ENCODE measurements at regions of chr1 and their contacts with region 1.

Region 1: DNA sequence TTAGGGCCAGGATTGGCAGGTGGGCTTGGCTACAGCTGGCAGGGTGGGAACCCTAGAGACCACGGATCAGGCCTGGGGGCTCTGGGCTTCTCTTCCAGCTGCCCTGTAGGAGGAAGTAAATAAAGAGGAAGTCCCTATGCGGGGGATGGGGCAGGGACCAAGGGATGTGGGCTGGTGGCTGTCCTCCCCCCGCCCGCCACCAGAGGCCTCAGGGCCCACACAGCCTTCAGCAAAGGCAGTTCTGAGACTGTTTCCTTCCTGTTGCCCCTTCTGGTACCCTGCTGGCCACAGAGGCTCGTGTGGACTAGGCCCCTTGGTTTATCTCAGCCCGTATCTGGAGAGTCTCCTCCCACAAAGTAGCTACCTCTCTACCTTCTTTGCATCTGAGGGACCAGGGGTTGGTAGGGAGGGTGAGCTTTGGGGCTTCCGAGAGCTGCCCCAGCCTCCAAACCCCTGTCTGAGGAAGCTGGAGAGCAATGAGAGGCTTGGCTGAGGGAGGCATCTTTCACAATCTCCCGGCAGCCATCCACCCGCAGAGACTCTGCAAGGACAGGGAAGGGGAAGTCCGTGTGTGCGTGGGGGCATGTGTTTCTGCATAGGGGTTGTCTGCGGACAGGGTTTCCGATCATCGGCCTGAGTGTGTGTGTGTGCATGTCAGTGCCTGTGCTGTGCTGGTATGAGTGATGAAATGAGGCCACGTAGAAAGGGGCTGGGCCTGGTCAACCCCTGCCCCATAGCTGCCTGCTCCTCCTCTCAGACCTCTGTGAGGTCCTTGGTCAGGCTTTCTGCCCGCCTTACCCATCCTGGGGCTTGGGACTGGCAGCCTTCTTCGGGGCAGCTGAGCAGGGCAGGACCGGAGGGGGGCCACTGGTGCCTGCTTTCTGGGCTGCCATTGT is 12.5 kb downstream of the RPS6KA1 start:
- DNase-seq: peak; percentile 73
- H3K4me3 Mint-ChIP-seq: peak overlapping the region; percentile 76
- H3K27ac Mint-ChIP-seq: peak overlapping the region; percentile 95
- H3K4me1 Mint-ChIP-seq: peaks cover 85% of the 10 kb centered on the region
- H3K27me3 Mint-ChIP-seq: no peaks in the 10 kb centered on the region

Region 2: DNA sequence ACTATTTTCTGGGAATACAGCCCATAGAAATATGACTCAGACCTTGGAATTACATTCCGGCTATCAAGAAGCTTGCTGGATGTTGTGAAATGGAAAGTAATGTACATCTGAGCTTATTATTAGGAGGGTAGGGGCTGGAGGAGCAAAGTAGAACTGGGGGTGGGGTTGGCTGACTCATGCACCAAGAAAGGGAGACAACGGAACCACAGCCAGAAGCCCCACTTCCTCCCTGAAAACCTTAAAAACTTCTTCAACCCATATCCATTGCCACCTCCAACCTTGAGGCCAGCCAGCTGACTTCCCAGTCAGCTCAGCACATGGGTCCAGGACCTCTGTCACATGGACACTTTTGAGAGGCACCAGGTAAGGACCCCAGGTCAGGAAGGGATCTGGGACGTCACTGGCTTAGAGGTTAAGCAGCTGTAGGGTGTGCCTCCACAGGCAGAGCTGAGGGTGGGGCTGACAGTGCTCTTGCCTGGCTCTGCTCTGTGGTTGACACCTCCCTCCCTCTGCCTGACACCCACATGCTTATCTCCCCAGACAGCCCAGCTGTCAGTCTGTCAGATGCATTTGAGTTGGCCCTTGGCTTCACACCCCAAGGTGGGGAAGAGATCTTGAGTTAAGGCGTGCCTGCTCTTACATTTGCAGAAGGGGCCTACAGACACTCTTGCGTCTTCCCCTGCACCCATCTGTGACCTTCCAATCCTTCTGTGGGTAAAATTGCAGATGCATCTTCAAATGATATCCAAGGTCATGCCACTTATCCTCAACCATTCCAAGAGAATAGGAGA is 163.8 kb before region 1 on chr1:
- intact Hi-C with region 1: loop called (anchors 5 kb)
- DNase-seq: peak; percentile 82
- H3K4me3 Mint-ChIP-seq: peak overlapping the region; percentile 69
- H3K27ac Mint-ChIP-seq: peak overlapping the region; percentile 76
- H3K4me1 Mint-ChIP-seq: peaks cover 66% of the 10 kb centered on the region
- H3K27me3 Mint-ChIP-seq: peaks cover 3% of the 10 kb centered on the region

Region 3: GRCh38 chr1:26500488-26501175 is 41.4 kb before region 1 on chr1:
- intact Hi-C with region 1: loop called (anchors 1 kb)
- DNase-seq: peak; percentile 84
- H3K4me3 Mint-ChIP-seq: peak overlapping the region; percentile 90
- H3K27ac Mint-ChIP-seq: peak overlapping the region; percentile 91
- H3K4me1 Mint-ChIP-seq: peaks cover 18% of the 10 kb centered on the region
- H3K27me3 Mint-ChIP-seq: no peaks in the 10 kb centered on the region

Region 4: DNA sequence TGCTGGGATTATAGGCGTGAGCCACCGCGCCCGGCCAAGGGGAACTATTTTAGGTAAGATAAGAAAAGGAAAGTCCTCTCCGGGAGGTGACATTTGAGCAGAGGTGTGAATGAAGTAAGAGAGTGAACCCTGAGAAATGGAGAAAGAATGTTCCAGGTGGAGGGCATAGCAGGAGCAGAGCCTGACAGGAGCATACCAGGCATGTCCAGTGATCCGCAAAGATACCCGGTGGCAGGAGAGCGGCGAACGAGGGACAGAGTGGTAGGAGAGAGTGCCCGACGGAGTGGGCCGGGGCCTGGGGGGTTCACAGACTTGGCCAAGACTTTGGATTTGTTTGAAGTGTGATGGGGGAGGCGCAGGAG is 20.4 kb before region 1 on chr1:
- intact Hi-C with region 1: no loop called
- DNase-seq: no peak
- H3K4me3 Mint-ChIP-seq: no peak overlapping the region
- H3K27ac Mint-ChIP-seq: no peak overlapping the region
- H3K4me1 Mint-ChIP-seq: peaks cover 6% of the 10 kb centered on the region
- H3K27me3 Mint-ChIP-seq: peaks cover 22% of the 10 kb centered on the region

Region 5: DNA sequence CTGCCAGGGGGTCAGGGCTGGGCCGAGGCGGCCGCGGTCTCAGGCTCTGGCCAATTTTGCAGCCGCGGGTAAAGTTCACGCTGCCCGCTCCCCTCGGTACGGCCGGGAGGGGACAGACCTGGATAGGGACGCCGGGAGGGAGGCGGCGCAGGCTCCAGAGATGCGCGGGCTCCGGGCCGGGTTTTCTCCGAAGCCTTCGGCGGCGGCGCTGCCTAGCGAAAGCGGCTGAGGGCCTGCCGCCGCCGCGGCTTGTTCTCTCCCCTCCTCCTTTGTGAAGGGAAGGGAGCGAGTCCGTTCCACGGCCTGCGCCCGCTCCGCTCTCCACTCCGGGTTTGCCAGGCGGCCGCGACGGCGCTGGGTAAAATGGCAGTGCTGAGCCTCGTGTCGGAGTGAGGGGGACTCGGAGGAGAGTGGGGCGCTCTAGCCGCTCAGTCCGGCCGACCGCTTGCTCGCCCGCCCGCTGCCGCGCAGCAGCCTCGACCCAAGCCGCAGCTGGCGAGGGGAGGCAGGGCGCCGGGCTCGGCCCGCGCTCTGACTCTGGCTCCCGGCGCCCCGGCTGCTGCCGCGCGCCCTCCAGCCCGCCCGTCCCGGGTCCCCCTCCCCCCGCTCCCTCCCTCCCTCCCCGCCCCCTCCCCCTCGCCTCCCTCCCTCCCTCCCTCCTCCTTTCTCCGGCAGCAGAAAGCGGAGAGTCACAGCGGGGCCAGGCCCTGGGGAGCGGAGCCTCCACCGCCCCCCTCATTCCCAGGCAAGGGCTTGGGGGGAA is 153.5 kb after region 1 on chr1 and contains the start of gene ARID1A:
- intact Hi-C with region 1: loop called (anchors 2 kb)
- DNase-seq: peak; percentile 96
- H3K4me3 Mint-ChIP-seq: peak within 1 kb of the TSS; percentile 90
- H3K27ac Mint-ChIP-seq: peak within 1 kb of the TSS; percentile 96
- H3K4me1 Mint-ChIP-seq: peaks cover 31% of the 10 kb centered on the region
- H3K27me3 Mint-ChIP-seq: no peaks in the 10 kb centered on the region
- total RNA-seq, gene ARID1A: 130 and 132 TPM in 2 replicates

Region 6: GRCh38 chr1:26826261-26827105 is 284.4 kb after region 1 on chr1 and contains the start of gene ZDHHC18:
- intact Hi-C with region 1: loop called (anchors 5 kb)
- DNase-seq: peak; percentile 74
- H3K4me3 Mint-ChIP-seq: peak within 1 kb of the TSS; percentile 98
- H3K27ac Mint-ChIP-seq: peak within 1 kb of the TSS; percentile 97
- H3K4me1 Mint-ChIP-seq: peaks cover 63% of the 10 kb centered on the region
- H3K27me3 Mint-ChIP-seq: no peaks in the 10 kb centered on the region
- total RNA-seq, gene ZDHHC18: 87.3 and 94.4 TPM in 2 replicates

Region 7: GRCh38 chr1:26921540-26922430 is 379.7 kb after region 1 on chr1 and contains the start of gene NUDC:
- intact Hi-C with region 1: loop called (anchors 1 kb)
- DNase-seq: peak; percentile 97
- H3K4me3 Mint-ChIP-seq: peak within 1 kb of the TSS; percentile 97
- H3K27ac Mint-ChIP-seq: peak within 1 kb of the TSS; percentile 96
- H3K4me1 Mint-ChIP-seq: peaks cover 31% of the 10 kb centered on the region
- H3K27me3 Mint-ChIP-seq: peaks cover 2% of the 10 kb centered on the region
- total RNA-seq, gene NUDC: 151 and 152 TPM in 2 replicates

Measured in activated T-helper 1 cell treated with anti-CD3 and anti-CD28 coated beads, Interleukin-12 subunit alpha, Interleukin-12 subunit beta, Interleukin-2, Interleukin-4 antibody, amounts not matched to agents 30 ng/mL and 10 ng/mL and 1 ng/mL, durations not matched to agents 14 hours and 24 hours and 36 hours (primary cell).